ENCODE measurements at regions of chr22 and their contacts with region 1.

Region 1: GRCh38 chr22:39532215-39533071 is at the start of gene RPS19BP1:
- DNase-seq: peak; percentile 99 to 100
- H3K4me3 ChIP-seq: peak within 1 kb of the TSS; percentile 79 to 94
- H3K27ac ChIP-seq: peak within 1 kb of the TSS; percentile 90 to 97
- H3K4me1 ChIP-seq: peaks cover 9 to 58% (median 51%) of the 10 kb centered on the region in 4 donors
- H3K27me3 ChIP-seq: no peaks in the 10 kb centered on the region
- CTCF ChIP-seq: no peak

Region 2: GRCh38 chr22:39319270-39320022 is 213.0 kb before region 1 on chr22 and contains the start of gene RPL3:
- intact Hi-C with region 1: loop called (anchors 5 kb)
- DNase-seq: peak; percentile 95 to 97
- H3K4me3 ChIP-seq: peak within 1 kb of the TSS; percentile 55 to 67
- H3K27ac ChIP-seq: peak within 1 kb of the TSS; percentile 97 to 99
- H3K4me1 ChIP-seq: peaks cover 0 to 50% (median 32%) of the 10 kb centered on the region in 4 donors
- H3K27me3 ChIP-seq: no peaks in the 10 kb centered on the region
- CTCF ChIP-seq: no peak

Region 3: DNA sequence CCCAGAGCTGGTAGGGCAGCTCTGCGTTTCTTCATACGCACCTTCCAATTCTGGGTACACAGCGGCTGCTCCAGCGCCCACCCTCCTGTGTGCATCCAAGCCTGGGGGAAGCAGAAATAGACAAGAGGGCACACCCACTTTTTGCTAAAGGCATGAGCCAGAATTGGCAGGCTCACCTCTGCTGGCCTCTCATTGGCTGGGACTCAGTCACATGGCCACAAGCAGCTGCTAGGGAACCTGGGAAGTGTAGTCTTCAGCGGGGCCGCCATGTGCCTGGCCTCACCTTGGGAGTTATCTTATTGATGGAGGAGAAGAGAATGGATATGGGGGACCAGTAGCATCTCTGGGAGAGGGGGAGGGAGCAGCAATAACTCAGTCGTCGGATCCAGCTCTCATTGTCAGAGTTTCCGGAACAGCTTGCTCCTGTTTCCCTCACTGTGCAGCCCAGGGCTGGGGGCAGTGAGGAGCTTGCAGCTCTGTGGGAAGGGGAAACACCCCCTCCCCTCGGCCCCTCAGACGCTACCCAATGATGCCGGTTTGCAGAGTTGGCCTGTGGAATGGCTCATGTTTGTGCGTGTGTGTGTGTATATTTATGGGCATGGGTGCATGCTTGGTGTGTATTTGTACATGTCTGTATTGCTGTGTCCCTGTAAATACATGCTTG is 42.2 kb before region 1 on chr22:
- intact Hi-C with region 1: loop called (anchors 5 kb)
- DNase-seq: peak; percentile 77 to 82
- H3K4me3 ChIP-seq: no peak overlapping the region
- H3K27ac ChIP-seq: no peak overlapping the region
- H3K4me1 ChIP-seq: no peaks in the 10 kb centered on the region
- H3K27me3 ChIP-seq: peaks cover 0 to 20% of the 10 kb centered on the region in 2 donors
- CTCF ChIP-seq: no peak

Region 4: GRCh38 chr22:39699631-39700360 is 167.4 kb after region 1 on chr22:
- intact Hi-C with region 1: no loop called
- DNase-seq: no peak
- H3K4me3 ChIP-seq: no peak overlapping the region
- H3K27ac ChIP-seq: no peak overlapping the region
- H3K4me1 ChIP-seq: no peaks in the 10 kb centered on the region
- H3K27me3 ChIP-seq: peaks cover 0 to 62% of the 10 kb centered on the region in 2 donors
- CTCF ChIP-seq: no peak

Region 5: DNA sequence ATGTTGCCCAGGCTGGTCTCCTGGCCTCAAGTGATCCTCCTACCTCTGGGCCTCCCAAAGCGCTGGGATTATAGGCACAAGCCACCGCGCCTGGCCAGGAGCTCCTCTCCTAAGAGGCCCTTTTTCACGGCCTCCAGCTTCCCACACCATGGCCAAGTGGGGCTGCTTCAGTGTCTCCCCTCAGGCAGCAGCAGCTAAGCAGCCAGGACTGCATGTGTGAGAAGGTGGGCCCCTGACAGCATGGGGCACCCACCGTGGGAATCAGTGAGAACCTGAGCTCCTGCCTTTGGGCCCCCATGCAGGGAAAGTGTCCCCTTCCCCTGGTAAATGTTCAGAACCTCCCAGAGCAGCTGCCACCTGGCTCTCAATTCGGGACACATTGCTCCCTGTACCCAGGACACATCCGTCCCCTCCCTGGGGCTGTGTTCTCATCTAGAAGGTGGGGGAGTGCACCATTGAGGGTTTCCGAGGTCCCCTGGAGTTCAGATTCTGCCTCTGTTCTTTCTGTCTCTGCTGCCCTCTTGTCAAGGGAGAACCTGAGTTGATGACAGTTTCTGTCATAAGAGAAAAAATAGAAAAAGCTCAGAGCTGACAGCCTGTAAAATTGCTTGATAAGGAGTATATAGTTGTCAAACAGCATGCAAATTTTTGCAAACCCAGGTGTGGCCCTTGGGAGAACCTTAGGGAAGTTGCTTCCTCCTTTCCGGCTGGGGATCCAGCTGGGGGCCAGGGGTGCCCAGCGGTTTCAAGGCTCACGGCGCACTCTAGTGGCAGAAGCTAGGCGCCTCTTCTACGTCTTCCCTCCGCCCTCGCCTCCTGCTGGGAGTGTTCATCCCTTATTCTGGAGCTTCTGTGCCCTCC is 492.0 kb after region 1 on chr22:
- intact Hi-C with region 1: loop called (anchors 5 kb)
- DNase-seq: peak in 1 of 2 donors; percentile 42
- H3K4me3 ChIP-seq: no peak overlapping the region
- H3K27ac ChIP-seq: no peak overlapping the region
- H3K4me1 ChIP-seq: peaks cover 0 to 27% (median 0%) of the 10 kb centered on the region in 4 donors
- H3K27me3 ChIP-seq: peaks cover 0 to 37% of the 10 kb centered on the region in 2 donors
- CTCF ChIP-seq: peak; percentile 55 to 67

Region 6: DNA sequence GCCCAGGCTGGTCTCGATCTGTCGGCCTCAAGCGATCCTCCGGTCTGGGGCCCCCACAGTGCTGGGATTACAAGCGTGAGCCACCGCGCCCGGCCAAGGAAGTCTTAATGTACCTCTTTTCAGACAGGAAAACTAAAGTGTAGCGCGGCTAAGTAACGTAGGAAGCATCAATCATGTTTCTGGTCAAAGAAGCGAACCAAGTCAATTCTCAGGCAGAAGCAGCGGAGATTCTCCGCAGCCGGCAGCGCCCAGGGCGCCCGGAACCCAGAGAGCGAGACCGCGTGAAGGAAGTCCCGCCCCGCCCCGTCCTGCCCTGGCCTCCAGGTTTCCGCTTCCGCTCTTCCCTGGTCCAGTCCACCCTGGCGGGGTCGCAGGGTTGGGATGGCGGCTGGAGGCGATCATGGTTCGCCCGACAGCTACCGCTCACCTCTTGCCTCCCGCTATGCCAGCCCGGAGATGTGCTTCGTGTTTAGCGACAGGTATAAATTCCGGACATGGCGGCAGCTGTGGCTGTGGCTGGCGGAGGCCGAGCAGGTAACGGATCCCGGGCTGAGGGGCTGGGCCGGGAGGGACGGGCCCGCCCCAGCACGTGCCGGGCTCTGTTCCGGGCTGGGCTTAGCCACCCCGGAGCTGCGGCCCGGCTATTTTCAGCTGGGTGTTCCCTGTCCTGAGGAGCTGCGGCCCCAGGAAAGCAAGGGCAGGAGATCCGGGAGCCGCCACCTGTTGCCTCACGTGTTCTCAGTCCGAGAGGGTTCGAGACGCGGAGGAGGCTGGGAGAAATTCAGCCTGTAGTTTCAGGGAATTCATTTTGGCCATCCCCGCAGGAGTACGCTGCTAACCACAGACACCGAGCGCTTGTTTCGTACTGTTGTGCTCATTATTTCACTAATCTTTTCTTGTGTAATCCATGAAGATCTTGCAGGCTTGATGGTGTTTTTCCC is 814.0 kb after region 1 on chr22 and contains the start of gene ADSL:
- intact Hi-C with region 1: loop called (anchors 10 kb)
- DNase-seq: peak; percentile 85 to 93
- H3K4me3 ChIP-seq: peak within 1 kb of the TSS; percentile 70 to 71
- H3K27ac ChIP-seq: peak within 1 kb of the TSS; percentile 82 to 87
- H3K4me1 ChIP-seq: peaks cover 0 to 23% (median 19%) of the 10 kb centered on the region in 4 donors
- H3K27me3 ChIP-seq: no peaks in the 10 kb centered on the region
- CTCF ChIP-seq: peak; percentile 19 to 20